CD8-positive, alpha-beta T cell (primary cell): ENCODE measurements at regions of chr1 and their contacts with region 1.

Region 1: DNA sequence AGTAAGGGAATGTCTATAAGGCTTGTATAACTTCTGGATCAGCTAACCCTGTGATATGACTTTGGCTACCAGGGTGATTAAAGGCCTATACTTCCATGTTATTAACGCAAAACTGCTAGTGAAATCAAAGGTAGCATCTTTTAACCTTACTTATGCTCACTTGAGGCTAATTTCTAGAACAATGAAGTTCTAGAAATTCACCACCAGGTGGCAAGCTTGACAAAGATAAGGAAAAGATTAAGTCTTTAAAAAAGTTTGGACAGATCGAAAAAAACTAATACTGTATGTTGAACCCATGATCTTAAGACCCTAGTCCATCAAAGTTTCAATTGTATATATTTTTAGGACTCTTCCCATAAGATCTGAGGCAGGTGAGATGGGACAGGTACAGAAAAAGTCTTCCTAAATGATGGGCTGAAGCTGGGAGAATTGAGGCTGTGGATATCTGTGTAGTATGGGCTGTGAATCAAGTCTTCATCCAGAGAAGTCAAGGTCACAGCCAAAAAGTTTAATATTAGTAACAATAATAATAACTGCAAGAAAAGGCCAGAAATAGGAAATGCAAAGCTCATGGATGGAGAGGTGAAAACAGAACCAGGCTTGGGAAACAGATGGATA is 18.8 kb downstream of the KYAT3 start:
- DNase-seq: peak in 2 of 9 experiments; percentile 56 to 66
- ATAC-seq: peak; percentile 52
- H3K4me3 ChIP-seq: no peak overlapping the region
- H3K4me3 Mint-ChIP-seq: no peak overlapping the region
- H3K27ac ChIP-seq: no peak overlapping the region
- H3K27ac Mint-ChIP-seq: no peak overlapping the region
- H3K4me1 ChIP-seq: no peaks in the 10 kb centered on the region
- H3K4me1 Mint-ChIP-seq: peaks cover 17% of the 10 kb centered on the region
- H3K27me3 ChIP-seq: no peaks in the 10 kb centered on the region
- H3K27me3 Mint-ChIP-seq: no peaks in the 10 kb centered on the region
- CTCF ChIP-seq: peak; percentile 75

Region 2: GRCh38 chr1:87730274-87731216 is 1243.1 kb before region 1 on chr1:
- CTCF ChIA-PET with region 1: no interaction called
- POLR2A ChIA-PET with region 1: no interaction called
- intact Hi-C with region 1: no loop called
- DNase-seq: no peak
- ATAC-seq: no peak
- H3K4me3 ChIP-seq: no peak overlapping the region
- H3K4me3 Mint-ChIP-seq: no peak overlapping the region
- H3K27ac ChIP-seq: no peak overlapping the region
- H3K27ac Mint-ChIP-seq: no peak overlapping the region
- H3K4me1 ChIP-seq: no peaks in the 10 kb centered on the region
- H3K4me1 Mint-ChIP-seq: no peaks in the 10 kb centered on the region
- H3K27me3 ChIP-seq: no peaks in the 10 kb centered on the region
- H3K27me3 Mint-ChIP-seq: no peaks in the 10 kb centered on the region
- CTCF ChIP-seq: no peak

Region 3: DNA sequence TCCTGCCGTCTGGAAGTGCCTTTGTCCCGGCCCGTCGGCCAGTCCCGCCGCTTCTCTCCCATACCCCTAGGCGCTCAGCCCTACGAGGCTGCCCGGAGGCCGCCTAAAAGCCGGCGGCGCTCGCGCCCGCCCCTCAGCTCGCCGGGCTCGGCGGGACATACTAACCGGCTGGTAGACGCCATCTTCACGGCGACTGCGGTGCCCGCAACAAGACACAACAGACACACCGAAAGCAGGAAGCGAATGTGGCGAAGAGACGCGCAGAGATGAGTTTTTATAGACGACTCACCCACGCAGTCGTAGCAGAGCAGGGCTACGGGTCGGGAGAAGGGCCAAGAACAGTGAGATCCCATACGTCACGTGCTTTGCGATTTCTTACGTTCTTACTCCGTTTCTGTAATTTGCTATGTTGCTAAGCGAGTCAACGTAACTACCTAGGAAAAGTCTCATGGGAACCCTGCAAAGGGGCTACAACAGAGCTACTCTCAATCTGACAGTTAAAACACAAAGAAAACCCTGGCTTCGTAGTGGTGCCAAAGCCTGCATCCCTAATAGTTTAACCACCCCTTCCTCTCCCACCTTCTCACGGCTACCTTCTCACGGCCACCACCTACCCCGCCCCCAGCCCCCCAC is 82.2 kb before region 1 on chr1 and contains the start of gene GTF2B:
- CTCF ChIA-PET with region 1: no interaction called
- POLR2A ChIA-PET with region 1: no interaction called
- intact Hi-C with region 1: no loop called
- DNase-seq: peak; percentile 86 to 99 (median 94)
- ATAC-seq: peak; percentile 90
- H3K4me3 ChIP-seq: peak within 1 kb of the TSS; percentile 89 to 92
- H3K4me3 Mint-ChIP-seq: peak within 1 kb of the TSS; percentile 92
- H3K27ac ChIP-seq: peak within 1 kb of the TSS; percentile 92 to 93
- H3K27ac Mint-ChIP-seq: peak within 1 kb of the TSS; percentile 95
- H3K4me1 ChIP-seq: peaks cover 35% of the 10 kb centered on the region
- H3K4me1 Mint-ChIP-seq: peaks cover 45% of the 10 kb centered on the region
- H3K27me3 ChIP-seq: no peaks in the 10 kb centered on the region
- H3K27me3 Mint-ChIP-seq: no peaks in the 10 kb centered on the region
- CTCF ChIP-seq: no peak
- total RNA-seq, gene GTF2B: 85.4 to 91.3 TPM

Region 4: DNA sequence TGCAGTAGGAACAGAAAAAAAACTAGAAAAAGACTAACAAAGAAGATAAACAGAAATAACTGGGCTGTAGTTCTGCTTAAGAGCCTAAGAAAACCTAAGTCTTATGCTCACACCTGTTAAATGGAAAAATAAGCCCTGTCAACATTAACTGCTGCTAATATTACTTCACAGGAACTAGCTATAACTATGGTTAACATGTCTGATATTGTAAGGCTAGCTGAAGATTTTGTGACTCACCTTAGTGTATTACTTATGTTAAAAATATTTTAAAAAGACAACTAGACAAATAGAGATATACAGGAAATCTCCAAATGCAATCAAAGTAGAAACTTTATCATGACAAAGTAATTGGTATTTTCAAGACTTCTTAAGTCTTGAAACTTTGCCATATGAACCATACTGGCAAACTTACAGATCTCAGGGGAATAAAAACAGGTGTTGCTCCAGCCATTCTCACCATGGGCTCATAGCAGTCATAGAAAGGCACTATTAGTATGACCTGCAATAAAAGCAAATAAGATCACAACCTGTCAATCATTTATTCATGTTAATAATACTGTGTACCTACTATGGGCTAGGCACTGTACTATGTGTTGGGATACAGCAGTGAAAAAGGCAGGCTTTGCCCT is 11.9 kb before region 1 on chr1:
- CTCF ChIA-PET with region 1: interaction called, 12 read pairs
- POLR2A ChIA-PET with region 1: no interaction called
- intact Hi-C with region 1: no loop called
- DNase-seq: no peak
- ATAC-seq: no peak
- H3K4me3 ChIP-seq: no peak overlapping the region
- H3K4me3 Mint-ChIP-seq: no peak overlapping the region
- H3K27ac ChIP-seq: no peak overlapping the region
- H3K27ac Mint-ChIP-seq: no peak overlapping the region
- H3K4me1 ChIP-seq: no peaks in the 10 kb centered on the region
- H3K4me1 Mint-ChIP-seq: no peaks in the 10 kb centered on the region
- H3K27me3 ChIP-seq: no peaks in the 10 kb centered on the region
- H3K27me3 Mint-ChIP-seq: no peaks in the 10 kb centered on the region
- CTCF ChIP-seq: no peak

Region 5: GRCh38 chr1:89444791-89445190 is 471.2 kb after region 1 on chr1:
- CTCF ChIA-PET with region 1: interaction called, 10 read pairs
- POLR2A ChIA-PET with region 1: no interaction called
- intact Hi-C with region 1: no loop called
- DNase-seq: no peak
- ATAC-seq: no peak
- H3K4me3 ChIP-seq: no peak overlapping the region
- H3K4me3 Mint-ChIP-seq: no peak overlapping the region
- H3K27ac ChIP-seq: no peak overlapping the region
- H3K27ac Mint-ChIP-seq: no peak overlapping the region
- H3K4me1 ChIP-seq: no peaks in the 10 kb centered on the region
- H3K4me1 Mint-ChIP-seq: no peaks in the 10 kb centered on the region
- H3K27me3 ChIP-seq: no peaks in the 10 kb centered on the region
- H3K27me3 Mint-ChIP-seq: peaks cover 3% of the 10 kb centered on the region
- CTCF ChIP-seq: no peak